Activated naive CD4-positive, alpha-beta T cell treated with anti-CD3 and anti-CD28 coated beads for 36 hours (primary cell): ENCODE measurements at regions of chr4 and their contacts with region 1.

Region 1: GRCh38 chr4:89469930-89470375 is 162.4 kb upstream of the GPRIN3 start:
- DNase-seq: peak; percentile 54
- H3K4me3 Mint-ChIP-seq: peak overlapping the region; percentile 2
- H3K27ac Mint-ChIP-seq: peak overlapping the region; percentile 71
- H3K4me1 Mint-ChIP-seq: peaks cover 26% of the 10 kb centered on the region
- H3K27me3 Mint-ChIP-seq: no peaks in the 10 kb centered on the region

Region 2: DNA sequence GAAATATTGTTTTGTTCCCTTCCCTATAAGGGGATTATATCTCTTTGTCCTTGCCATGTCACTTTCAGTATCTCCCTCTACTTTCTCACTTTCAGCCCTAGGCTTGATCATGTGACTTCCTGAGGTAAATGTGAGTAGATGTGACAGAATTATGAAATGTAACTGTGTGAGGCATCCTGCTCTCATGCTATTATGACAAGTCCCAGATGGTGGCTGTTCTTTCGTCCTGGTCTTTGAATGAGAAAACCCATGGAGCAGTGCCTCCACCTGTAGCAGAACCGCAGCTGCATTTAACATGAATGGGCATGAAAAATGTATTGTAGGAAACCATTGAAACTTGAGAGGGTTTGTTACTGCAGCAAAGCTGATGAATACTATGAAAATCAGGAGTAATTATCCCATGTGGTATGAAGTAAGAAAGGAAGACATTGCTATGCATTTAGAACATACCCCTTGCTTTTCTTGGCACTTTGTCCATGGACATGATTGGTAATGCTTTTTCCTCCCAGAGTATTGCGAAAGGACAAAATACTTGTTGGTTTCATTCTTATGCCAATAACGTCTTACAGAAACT is 39.8 kb after region 1 on chr4:
- CTCF ChIA-PET with region 1: no interaction called
- intact Hi-C with region 1: loop called (anchors 1 kb)
- DNase-seq: peak; percentile 44
- H3K4me3 Mint-ChIP-seq: no peak overlapping the region
- H3K27ac Mint-ChIP-seq: no peak overlapping the region
- H3K4me1 Mint-ChIP-seq: peaks cover 17% of the 10 kb centered on the region
- H3K27me3 Mint-ChIP-seq: no peaks in the 10 kb centered on the region